ENCODE measurements at regions of chr1 and their contacts with region 1.

Region 1: DNA sequence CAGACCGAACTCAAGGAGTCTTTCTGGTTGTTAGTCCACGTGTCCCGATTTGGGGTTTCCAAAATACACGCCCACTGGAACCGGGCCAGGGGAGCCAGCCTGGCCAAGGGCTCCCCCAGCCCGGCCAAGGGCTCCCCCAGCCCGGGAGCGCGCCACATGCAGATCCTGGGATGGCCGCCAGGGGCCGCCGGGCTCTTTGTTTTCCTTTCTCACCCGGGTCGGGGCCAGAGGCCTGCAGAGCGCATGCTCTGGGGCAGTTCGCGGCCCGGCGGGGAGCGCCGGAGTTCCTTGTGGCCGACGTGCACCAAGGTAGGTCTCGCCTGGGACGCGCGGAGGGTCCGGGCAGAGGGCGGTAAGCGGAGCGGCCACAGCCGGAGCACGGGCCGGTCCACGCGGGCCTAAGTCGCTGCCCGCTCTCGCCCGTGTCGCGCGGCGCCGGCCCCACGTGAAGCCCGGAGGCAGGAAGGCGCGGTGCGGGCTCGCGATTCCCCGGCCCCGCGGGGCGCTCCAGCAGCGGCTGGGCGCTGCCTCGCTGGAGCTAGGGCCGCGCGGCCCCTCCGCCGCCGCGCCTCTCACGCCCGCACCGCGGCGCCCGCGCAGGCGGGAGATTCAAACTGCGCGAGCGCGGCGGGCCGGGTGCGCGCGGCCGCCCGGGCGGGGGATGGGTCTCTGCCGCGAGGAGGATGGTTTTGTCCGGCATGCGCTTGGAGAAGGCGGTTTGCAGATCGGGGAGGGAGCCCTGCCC is 12.3 kb downstream of the RCC1 start:
- DNase-seq: peak; percentile 88 to 91
- ATAC-seq: peak; percentile 81 to 91 (median 83)
- H3K4me3 ChIP-seq: peak overlapping the region; percentile 46
- H3K4me3 Mint-ChIP-seq: peak overlapping the region; percentile 93
- H3K27ac ChIP-seq: peak overlapping the region; percentile 34
- H3K27ac Mint-ChIP-seq: peak overlapping the region; percentile 69 to 90
- H3K4me1 ChIP-seq: peaks cover 19% of the 10 kb centered on the region
- H3K4me1 Mint-ChIP-seq: peaks cover 15 to 22% of the 10 kb centered on the region in 2 donors
- H3K27me3 ChIP-seq: no peaks in the 10 kb centered on the region
- H3K27me3 Mint-ChIP-seq: no peaks in the 10 kb centered on the region
- CTCF ChIP-seq: peak; percentile 97

Region 2: DNA sequence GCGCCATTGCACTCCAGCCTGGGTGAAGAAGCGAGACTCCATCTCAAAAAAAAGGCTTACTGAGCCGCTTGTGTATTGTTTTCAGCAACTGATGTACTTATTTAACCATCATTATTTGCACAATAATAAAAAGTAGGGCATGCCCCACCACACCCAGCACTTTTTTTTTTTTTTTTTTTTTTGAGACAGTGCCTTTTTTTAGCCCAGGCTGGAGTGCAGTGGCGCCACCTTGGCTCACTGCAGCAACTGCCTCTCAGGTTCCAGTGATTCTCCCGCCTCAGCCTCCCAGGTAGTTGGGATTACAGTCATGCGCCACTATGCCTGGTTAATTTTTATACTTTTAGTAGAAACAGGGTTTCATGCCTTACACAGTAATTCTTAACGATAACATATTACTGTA is 22.5 kb after region 1 on chr1:
- intact Hi-C with region 1: no loop called
- DNase-seq: no peak
- ATAC-seq: no peak
- H3K4me3 ChIP-seq: no peak overlapping the region
- H3K4me3 Mint-ChIP-seq: no peak overlapping the region
- H3K27ac ChIP-seq: no peak overlapping the region
- H3K27ac Mint-ChIP-seq: no peak overlapping the region
- H3K4me1 ChIP-seq: no peaks in the 10 kb centered on the region
- H3K4me1 Mint-ChIP-seq: no peaks in the 10 kb centered on the region
- H3K27me3 ChIP-seq: no peaks in the 10 kb centered on the region
- H3K27me3 Mint-ChIP-seq: no peaks in the 10 kb centered on the region
- CTCF ChIP-seq: no peak

Region 3: GRCh38 chr1:28560886-28561285 is 42.7 kb after region 1 on chr1:
- intact Hi-C with region 1: no loop called
- DNase-seq: no peak
- ATAC-seq: no peak
- H3K4me3 ChIP-seq: no peak overlapping the region
- H3K4me3 Mint-ChIP-seq: no peak overlapping the region
- H3K27ac ChIP-seq: no peak overlapping the region
- H3K27ac Mint-ChIP-seq: no peak overlapping the region
- H3K4me1 ChIP-seq: no peaks in the 10 kb centered on the region
- H3K4me1 Mint-ChIP-seq: no peaks in the 10 kb centered on the region
- H3K27me3 ChIP-seq: no peaks in the 10 kb centered on the region
- H3K27me3 Mint-ChIP-seq: no peaks in the 10 kb centered on the region
- CTCF ChIP-seq: no peak

Region 4: DNA sequence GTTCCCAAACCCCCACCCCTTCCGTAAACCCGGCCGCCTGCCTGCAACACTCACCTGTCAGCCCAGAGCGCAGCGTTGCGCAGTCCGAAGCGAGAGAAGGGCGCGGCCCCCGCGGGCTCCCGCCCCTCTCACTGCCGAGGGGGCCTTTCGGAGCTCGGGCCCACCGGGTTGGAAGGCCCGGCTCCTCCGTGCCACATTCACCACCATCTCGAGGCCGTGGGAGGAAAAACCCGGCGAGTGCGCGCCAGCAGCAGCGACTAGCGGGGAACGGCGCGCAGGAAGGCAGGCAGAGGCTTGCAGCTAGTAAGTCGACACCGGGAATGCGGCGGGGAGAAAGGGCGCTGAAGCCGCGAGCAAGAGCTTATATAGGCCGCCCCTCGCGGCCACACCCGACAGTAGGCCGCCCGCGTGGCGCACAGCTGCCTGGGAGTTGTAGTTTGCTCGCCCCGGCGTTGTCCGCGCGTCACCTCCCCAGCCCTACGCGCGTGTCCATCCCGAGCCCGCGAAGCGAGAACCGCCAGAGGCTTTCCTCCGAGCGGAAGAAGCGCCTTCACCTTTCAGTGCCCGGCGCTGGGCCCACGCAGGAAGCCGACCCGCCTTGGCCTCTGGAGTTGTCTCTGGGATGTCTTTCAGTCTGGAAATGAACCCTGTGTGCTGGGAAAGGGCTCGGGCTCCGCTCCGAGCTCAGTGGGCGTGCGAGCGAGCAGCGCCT is 63.5 kb after region 1 on chr1:
- intact Hi-C with region 1: loop called (anchors 1 kb)
- DNase-seq: peak; percentile 80 to 96
- ATAC-seq: peak; percentile 90 to 95 (median 94)
- H3K4me3 ChIP-seq: peak overlapping the region; percentile 89
- H3K4me3 Mint-ChIP-seq: peak overlapping the region; percentile 92
- H3K27ac ChIP-seq: peak overlapping the region; percentile 65
- H3K27ac Mint-ChIP-seq: peak overlapping the region; percentile 83 to 89
- H3K4me1 ChIP-seq: peaks cover 27% of the 10 kb centered on the region
- H3K4me1 Mint-ChIP-seq: peaks cover 38 to 41% of the 10 kb centered on the region in 2 donors
- H3K27me3 ChIP-seq: no peaks in the 10 kb centered on the region
- H3K27me3 Mint-ChIP-seq: peaks cover 0 to 3% of the 10 kb centered on the region in 2 donors
- CTCF ChIP-seq: peak; percentile 5

Region 5: DNA sequence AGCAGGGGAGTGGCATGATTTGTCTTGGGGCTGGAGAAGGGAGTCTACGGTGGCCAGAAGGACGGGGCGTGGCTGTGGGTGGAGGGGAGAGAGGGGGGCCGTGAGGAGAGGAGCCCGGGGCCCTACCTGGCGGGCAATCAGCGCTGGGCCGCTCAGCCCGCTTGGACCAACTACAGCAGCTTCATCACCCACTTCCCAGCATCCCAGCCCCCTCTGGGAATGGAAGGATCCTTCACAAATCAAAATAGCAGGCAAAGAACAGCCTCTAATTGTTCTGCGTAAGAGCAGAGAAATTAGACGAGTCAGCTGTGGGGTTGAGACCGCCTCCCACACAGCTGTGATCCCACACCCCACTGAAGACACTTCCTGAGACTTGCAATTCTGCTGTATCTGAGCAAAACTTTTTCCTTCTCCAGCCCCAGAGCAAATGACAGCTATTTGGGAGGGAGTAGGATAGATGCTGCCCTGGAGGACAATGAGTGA is 337.3 kb after region 1 on chr1:
- intact Hi-C with region 1: no loop called
- DNase-seq: no peak
- ATAC-seq: no peak
- H3K4me3 ChIP-seq: no peak overlapping the region
- H3K4me3 Mint-ChIP-seq: no peak overlapping the region
- H3K27ac ChIP-seq: no peak overlapping the region
- H3K27ac Mint-ChIP-seq: peak overlapping the region in 1 of 2 donors; percentile 23
- H3K4me1 ChIP-seq: no peaks in the 10 kb centered on the region
- H3K4me1 Mint-ChIP-seq: peaks cover 6 to 8% of the 10 kb centered on the region in 2 donors
- H3K27me3 ChIP-seq: no peaks in the 10 kb centered on the region
- H3K27me3 Mint-ChIP-seq: peaks cover 0 to 14% of the 10 kb centered on the region in 2 donors
- CTCF ChIP-seq: no peak